ENCODE measurements at regions of chr11 and their contacts with region 1.

Region 1: GRCh38 chr11:113222241-113222640 is 92.1 kb upstream of the TTC12 start:
- DNase-seq: no peak
- H3K4me3 ChIP-seq: no peak overlapping the region
- H3K27ac ChIP-seq: no peak overlapping the region
- H3K4me1 ChIP-seq: peaks cover 18% of the 10 kb centered on the region
- H3K27me3 ChIP-seq: 0 out of 2 replicates have a peak, but pooled peaks cover 4% of the 10 kb centered on the region
- CTCF ChIP-seq: no peak

Region 2: DNA sequence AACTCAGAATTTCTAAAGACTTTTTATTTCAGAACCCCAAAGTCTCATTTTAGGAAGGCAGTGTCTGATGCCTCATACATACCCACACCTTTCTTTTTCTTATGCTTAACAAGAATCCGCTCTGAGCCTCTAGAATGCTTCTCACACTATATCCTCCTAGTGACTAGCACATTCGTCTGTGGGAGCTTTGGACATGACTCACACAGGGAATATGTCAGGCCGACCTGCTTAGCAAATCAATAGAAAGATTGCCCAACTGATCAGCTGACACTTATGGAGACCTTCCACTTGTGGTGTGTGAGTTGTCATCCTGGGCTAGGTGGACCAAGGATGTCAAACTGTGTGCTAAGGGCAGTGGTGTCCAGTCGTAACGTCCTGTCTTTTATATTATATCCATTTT is 37.7 kb before region 1 on chr11:
- CTCF ChIA-PET with region 1: no interaction called
- POLR2A ChIA-PET with region 1: no interaction called
- intact Hi-C with region 1: loop called (anchors 1 kb)
- DNase-seq: peak; percentile 40 to 94
- H3K4me3 ChIP-seq: no peak overlapping the region
- H3K27ac ChIP-seq: peak overlapping the region; percentile 83
- H3K4me1 ChIP-seq: peaks cover 29% of the 10 kb centered on the region
- H3K27me3 ChIP-seq: no peaks in the 10 kb centered on the region
- CTCF ChIP-seq: no peak